Left lung (tissue), 14 donors: ENCODE measurements at regions of chr10 and their contacts with region 1.

Region 1: DNA sequence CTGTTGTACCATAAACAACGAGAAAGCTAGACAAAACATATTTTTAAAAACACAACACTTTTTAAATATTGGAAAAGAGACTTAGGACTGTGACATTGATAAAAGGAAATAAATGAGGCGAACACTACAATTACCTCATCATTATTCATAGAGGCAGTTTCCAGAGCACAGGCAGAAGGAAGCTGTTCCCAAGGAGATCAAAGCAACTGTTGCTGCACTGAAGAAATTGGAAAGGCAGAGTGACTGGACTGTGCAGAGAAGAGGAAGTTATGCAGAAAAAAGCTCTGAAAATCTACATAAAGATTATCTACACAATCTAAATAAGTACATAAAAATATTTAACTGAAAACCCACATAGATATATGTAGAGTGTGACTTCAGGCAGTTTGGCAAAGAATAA is 32.8 kb downstream of the MYO3A start:
- DNase-seq: no peak
- ATAC-seq: no peak
- H3K4me3 ChIP-seq: no peak overlapping the region
- H3K27ac ChIP-seq: no peak overlapping the region
- H3K4me1 ChIP-seq: no peaks in the 10 kb centered on the region
- H3K27me3 ChIP-seq: no peaks in the 10 kb centered on the region
- CTCF ChIP-seq: no peak

Region 2: DNA sequence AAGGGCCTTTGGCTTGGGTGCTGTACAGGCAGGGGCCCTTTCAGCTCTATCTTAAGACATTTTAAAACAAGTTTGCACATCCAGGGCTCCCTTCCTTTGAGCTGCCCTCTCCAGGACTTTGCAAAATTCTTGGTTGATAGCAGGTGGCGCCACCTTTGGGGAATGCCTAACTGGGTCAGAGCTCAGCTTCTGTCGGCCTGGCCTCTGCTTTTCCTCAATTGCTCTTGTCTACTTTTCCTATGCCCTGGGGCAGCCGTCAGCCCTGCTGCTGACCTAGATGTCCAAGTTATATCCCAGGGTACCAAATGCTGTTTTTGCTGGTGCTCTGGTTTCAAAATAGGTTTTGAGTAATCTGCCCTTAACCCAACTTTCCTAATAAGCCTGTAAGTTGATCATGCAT is 537.1 kb after region 1 on chr10:
- intact Hi-C with region 1: loop called in 1 of 2 experiments (anchors 10 kb)
- DNase-seq: no peak
- ATAC-seq: peak; percentile 22
- H3K4me3 ChIP-seq: no peak overlapping the region
- H3K27ac ChIP-seq: peak overlapping the region in 1 of 2 donors; percentile 45
- H3K4me1 ChIP-seq: peaks cover 0 to 13% of the 10 kb centered on the region in 2 donors
- H3K27me3 ChIP-seq: no peaks in the 10 kb centered on the region
- CTCF ChIP-seq: no peak